ENCODE measurements at regions of chr1 and their contacts with region 1.

Region 1: GRCh38 chr1:16396591-16396990 is 29.5 kb downstream of the SZRD1 start:
- DNase-seq: no peak
- ATAC-seq: no peak
- H3K4me3 ChIP-seq: no peak overlapping the region
- H3K27ac ChIP-seq: no peak overlapping the region; the same call in 2 of the 3 replicates
- H3K4me1 ChIP-seq: peaks cover 2 to 7% of the 10 kb centered on the region in 2 experiments; a peak in 3 of 5 replicates
- H3K27me3 ChIP-seq: no peaks in the 10 kb centered on the region
- CTCF ChIP-seq: no peak
- EP300 ChIP-seq: no peak
- POLR2A ChIP-seq: 0 out of 2 replicates have a peak, but pooled peaks have one; percentile 24
- RAD21 ChIP-seq: no peak

Region 2: GRCh38 chr1:15218287-15219279 is 1178.0 kb before region 1 on chr1:
- CTCF ChIA-PET with region 1: no interaction called
- POLR2A ChIA-PET with region 1: no interaction called
- in situ Hi-C with region 1: no loop called
- intact Hi-C with region 1: no loop called
- DNase-seq: peak in 2 of 4 experiments; percentile 46 to 60
- ATAC-seq: peak; percentile 78
- H3K4me3 ChIP-seq: no peak overlapping the region
- H3K27ac ChIP-seq: peak overlapping the region; percentile 33; the same call in 2 of the 3 replicates
- H3K4me1 ChIP-seq: peaks cover 9 to 12% of the 10 kb centered on the region in 2 experiments; a peak in 4 of 5 replicates
- H3K27me3 ChIP-seq: peaks cover 17 to 39% of the 10 kb centered on the region in 2 experiments; a peak in 4 of 5 replicates
- CTCF ChIP-seq: no peak
- EP300 ChIP-seq: peak; percentile 70
- POLR2A ChIP-seq: no peak
- RAD21 ChIP-seq: peak in 1 of 2 experiments; percentile 14; a peak in 2 of 4 replicates

Region 3: GRCh38 chr1:16386454-16387113 is 10.0 kb before region 1 on chr1:
- CTCF ChIA-PET with region 1: no interaction called
- POLR2A ChIA-PET with region 1: interaction called, 15 read pairs
- in situ Hi-C with region 1: no loop called
- intact Hi-C with region 1: no loop called
- DNase-seq: no peak
- ATAC-seq: 0 out of 3 replicates have a peak, but pooled peaks have one; percentile 8
- H3K4me3 ChIP-seq: no peak overlapping the region
- H3K27ac ChIP-seq: no peak overlapping the region
- H3K4me1 ChIP-seq: peaks cover 3 to 28% of the 10 kb centered on the region in 2 experiments; a peak in 3 of 5 replicates
- H3K27me3 ChIP-seq: no peaks in the 10 kb centered on the region
- CTCF ChIP-seq: no peak
- EP300 ChIP-seq: no peak
- POLR2A ChIP-seq: no peak
- RAD21 ChIP-seq: no peak

Region 4: GRCh38 chr1:16409536-16410152 is 13.1 kb after region 1 on chr1:
- CTCF ChIA-PET with region 1: no interaction called
- POLR2A ChIA-PET with region 1: interaction called, 17 read pairs
- in situ Hi-C with region 1: no loop called
- intact Hi-C with region 1: no loop called
- DNase-seq: no peak
- ATAC-seq: peak; percentile 54; the same call in 2 of the 3 replicates
- H3K4me3 ChIP-seq: no peak overlapping the region
- H3K27ac ChIP-seq: no peak overlapping the region
- H3K4me1 ChIP-seq: peaks cover 0 to 15% of the 10 kb centered on the region in 2 experiments; a peak in 3 of 5 replicates
- H3K27me3 ChIP-seq: no peaks in the 10 kb centered on the region; a peak in 1 of 5 replicates
- CTCF ChIP-seq: no peak
- EP300 ChIP-seq: no peak
- POLR2A ChIP-seq: no peak
- RAD21 ChIP-seq: no peak